MCF 10A (cell line): ENCODE measurements at regions of chr12 and their contacts with region 1.

Region 1: DNA sequence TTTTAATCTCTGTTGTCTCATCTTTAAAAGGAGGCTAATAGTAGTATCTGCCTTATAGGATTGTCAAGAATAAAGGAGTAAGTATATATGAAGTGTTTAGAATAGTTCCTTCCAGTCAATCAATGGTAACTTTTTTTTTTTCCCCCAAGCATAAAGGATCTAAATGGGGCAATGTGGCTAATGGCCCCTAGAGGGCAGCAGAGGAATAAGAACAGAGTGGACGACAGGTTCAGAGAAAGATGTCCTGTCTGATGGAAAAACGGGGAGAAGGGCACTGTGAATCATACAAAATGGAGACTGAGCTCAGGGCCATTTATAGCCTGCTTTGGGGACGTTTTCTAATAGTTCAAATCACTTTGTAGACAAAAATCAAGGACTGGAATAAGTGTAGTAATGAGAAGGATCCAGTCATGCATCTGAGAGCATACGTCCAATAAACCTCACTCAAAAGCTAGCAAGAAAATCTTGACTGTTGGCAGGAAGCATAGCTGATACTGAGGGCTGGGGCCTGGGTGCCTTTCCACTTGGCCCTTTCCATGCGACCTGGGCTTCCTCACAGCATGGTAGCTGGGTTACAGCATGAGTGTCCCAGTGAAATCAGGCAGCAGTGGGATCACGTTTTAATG is 51.3 kb downstream of the IFNG-AS1 start:
- DNase-seq: peak; percentile 85
- H3K4me3 Mint-ChIP-seq: no peak overlapping the region
- H3K27ac Mint-ChIP-seq: peak overlapping the region; percentile 93
- H3K4me1 Mint-ChIP-seq: peaks cover 19% of the 10 kb centered on the region
- H3K27me3 Mint-ChIP-seq: no peaks in the 10 kb centered on the region
- CTCF ChIP-seq: peak; percentile 85

Region 2: DNA sequence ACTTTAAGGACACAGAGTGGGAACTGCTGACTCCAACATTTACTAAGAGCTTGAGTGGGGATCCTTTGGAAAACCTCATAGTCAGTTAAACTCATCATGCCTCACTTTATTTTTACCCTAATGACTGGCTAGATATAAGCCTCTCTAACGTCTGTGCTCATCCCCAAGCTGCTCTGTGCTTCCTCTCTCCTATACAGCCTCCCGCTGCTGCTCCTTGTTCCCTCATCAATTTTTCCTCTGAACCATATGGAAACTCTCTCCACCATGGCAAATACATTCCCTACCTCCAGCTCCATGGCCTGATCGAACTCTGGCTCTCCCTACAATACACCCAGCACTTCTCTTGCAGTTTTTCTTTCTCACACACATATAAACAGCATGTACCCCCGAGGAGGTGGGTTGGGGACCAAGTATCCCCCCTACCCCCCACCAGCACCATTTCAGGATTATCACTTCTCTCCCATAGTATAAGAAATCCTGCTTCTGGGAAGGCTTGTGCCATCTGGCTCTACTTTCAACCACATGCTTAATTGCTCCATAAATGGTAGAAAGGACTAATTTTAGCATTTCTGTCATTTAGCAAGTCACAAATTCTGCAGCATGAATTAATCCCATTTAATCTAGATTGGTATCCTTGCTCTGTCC is 431.2 kb before region 1 on chr12:
- CTCF ChIA-PET with region 1: no interaction called
- POLR2A ChIA-PET with region 1: no interaction called
- intact Hi-C with region 1: no loop called
- DNase-seq: no peak
- H3K4me3 Mint-ChIP-seq: no peak overlapping the region
- H3K27ac Mint-ChIP-seq: no peak overlapping the region
- H3K4me1 Mint-ChIP-seq: no peaks in the 10 kb centered on the region
- H3K27me3 Mint-ChIP-seq: no peaks in the 10 kb centered on the region
- CTCF ChIP-seq: no peak

Region 3: GRCh38 chr12:68028647-68029046 is 11.9 kb before region 1 on chr12:
- CTCF ChIA-PET with region 1: interaction called, 10 read pairs
- POLR2A ChIA-PET with region 1: interaction called, 8 read pairs
- intact Hi-C with region 1: no loop called
- DNase-seq: no peak
- H3K4me3 Mint-ChIP-seq: no peak overlapping the region
- H3K27ac Mint-ChIP-seq: no peak overlapping the region
- H3K4me1 Mint-ChIP-seq: no peaks in the 10 kb centered on the region
- H3K27me3 Mint-ChIP-seq: no peaks in the 10 kb centered on the region
- CTCF ChIP-seq: no peak

Region 4: DNA sequence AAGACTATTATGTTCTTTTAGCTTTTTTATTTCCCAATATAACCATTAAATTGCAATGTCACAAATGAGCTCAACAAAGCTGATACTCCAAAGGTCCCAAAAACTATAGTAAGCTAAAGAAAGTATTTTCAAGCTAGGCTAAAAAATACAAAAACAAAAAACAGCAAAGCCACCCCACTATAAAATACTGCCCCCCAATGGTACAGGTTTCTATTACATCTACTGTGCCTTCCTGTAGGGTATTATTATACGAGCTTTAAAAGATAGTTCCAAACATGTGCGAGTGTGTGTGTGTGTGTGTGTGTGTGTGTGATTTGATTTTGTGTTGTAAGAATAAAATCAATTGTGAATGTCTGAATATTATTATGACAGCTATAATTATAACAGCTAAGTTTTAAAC is 117.9 kb after region 1 on chr12:
- CTCF ChIA-PET with region 1: interaction called, 30 read pairs
- POLR2A ChIA-PET with region 1: interaction called, 4 read pairs
- intact Hi-C with region 1: loop called (anchors 1 kb)
- DNase-seq: peak; percentile 60
- H3K4me3 Mint-ChIP-seq: no peak overlapping the region
- H3K27ac Mint-ChIP-seq: no peak overlapping the region
- H3K4me1 Mint-ChIP-seq: peaks cover 11% of the 10 kb centered on the region
- H3K27me3 Mint-ChIP-seq: no peaks in the 10 kb centered on the region
- CTCF ChIP-seq: peak; percentile 40

Region 5: DNA sequence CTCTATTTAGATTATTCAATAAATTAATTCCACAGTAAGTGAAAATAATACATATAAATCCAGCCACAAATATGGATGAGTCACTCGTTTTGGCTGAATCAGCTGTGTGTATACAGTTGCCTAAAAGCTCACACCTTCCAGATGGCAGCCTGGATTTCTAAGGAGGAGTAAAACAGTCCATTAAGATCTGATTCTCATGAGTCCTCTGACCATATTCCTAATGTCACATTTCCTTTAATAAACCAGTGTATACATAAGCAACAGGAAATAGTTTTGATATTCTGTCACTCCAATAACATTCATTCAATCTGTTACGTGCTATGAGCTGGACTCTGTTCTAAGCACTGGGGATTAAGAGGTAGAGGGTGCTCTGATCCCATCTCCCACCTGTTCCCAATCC is 269.8 kb after region 1 on chr12:
- CTCF ChIA-PET with region 1: interaction called, 62 read pairs
- POLR2A ChIA-PET with region 1: no interaction called
- intact Hi-C with region 1: no loop called
- DNase-seq: peak; percentile 63
- H3K4me3 Mint-ChIP-seq: no peak overlapping the region
- H3K27ac Mint-ChIP-seq: no peak overlapping the region
- H3K4me1 Mint-ChIP-seq: no peaks in the 10 kb centered on the region
- H3K27me3 Mint-ChIP-seq: no peaks in the 10 kb centered on the region
- CTCF ChIP-seq: no peak

Region 6: GRCh38 chr12:68326716-68327115 is 286.2 kb after region 1 on chr12:
- CTCF ChIA-PET with region 1: interaction called, 33 read pairs
- POLR2A ChIA-PET with region 1: interaction called, 6 read pairs
- intact Hi-C with region 1: no loop called
- DNase-seq: no peak
- H3K4me3 Mint-ChIP-seq: no peak overlapping the region
- H3K27ac Mint-ChIP-seq: peak overlapping the region; percentile 19
- H3K4me1 Mint-ChIP-seq: peaks cover 11% of the 10 kb centered on the region
- H3K27me3 Mint-ChIP-seq: no peaks in the 10 kb centered on the region
- CTCF ChIP-seq: no peak